HCT116 (cell line): ENCODE measurements at regions of chr7 and their contacts with region 1.

Region 1: DNA sequence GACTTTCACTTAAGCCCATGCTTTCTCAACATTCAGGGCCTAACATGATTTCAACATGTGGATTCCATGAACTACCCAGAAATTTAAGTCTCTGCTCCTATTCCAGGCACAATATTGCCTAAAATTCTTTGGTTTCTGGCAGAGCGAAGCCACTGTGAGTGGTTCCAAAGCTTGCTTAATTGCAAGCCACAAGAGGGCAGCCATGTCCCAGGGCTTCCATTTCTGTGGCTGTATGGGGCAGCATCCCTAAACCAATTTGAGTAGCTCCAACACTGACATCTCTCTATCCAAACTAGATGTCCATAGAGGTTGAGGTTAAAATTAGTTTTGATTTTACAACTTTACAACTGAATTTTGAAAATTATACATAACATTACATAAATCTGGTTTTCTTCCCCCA is 56.3 kb upstream of the MDFIC start:
- DNase-seq: peak; percentile 46
- ATAC-seq: peak; percentile 89
- H3K4me3 ChIP-seq: no peak overlapping the region
- H3K27ac ChIP-seq: no peak overlapping the region
- H3K4me1 ChIP-seq: no peaks in the 10 kb centered on the region
- H3K27me3 ChIP-seq: no peaks in the 10 kb centered on the region
- CTCF ChIP-seq: peak; percentile 71 to 82 (median 75)
- POLR2A ChIP-seq: no peak
- RAD21 ChIP-seq: peak; percentile 92

Region 2: GRCh38 chr7:114432703-114433102 is 432.9 kb before region 1 on chr7:
- CTCF ChIA-PET with region 1: no interaction called
- POLR2A ChIA-PET with region 1: no interaction called
- RAD21 ChIA-PET with region 1: no interaction called
- intact Hi-C with region 1: no loop called
- DNase-seq: no peak
- ATAC-seq: no peak
- H3K4me3 ChIP-seq: no peak overlapping the region
- H3K27ac ChIP-seq: no peak overlapping the region
- H3K4me1 ChIP-seq: no peaks in the 10 kb centered on the region
- H3K27me3 ChIP-seq: no peaks in the 10 kb centered on the region
- CTCF ChIP-seq: no peak
- POLR2A ChIP-seq: no peak
- RAD21 ChIP-seq: no peak

Region 3: GRCh38 chr7:115217373-115217772 is 351.8 kb after region 1 on chr7:
- CTCF ChIA-PET with region 1: interaction called, 20 read pairs
- POLR2A ChIA-PET with region 1: no interaction called
- RAD21 ChIA-PET with region 1: interaction called, 6 to 10 read pairs
- intact Hi-C with region 1: loop called (anchors 5 kb)
- DNase-seq: no peak
- ATAC-seq: no peak
- H3K4me3 ChIP-seq: no peak overlapping the region
- H3K27ac ChIP-seq: no peak overlapping the region
- H3K4me1 ChIP-seq: no peaks in the 10 kb centered on the region
- H3K27me3 ChIP-seq: no peaks in the 10 kb centered on the region
- CTCF ChIP-seq: peak; percentile 4 to 42 (median 28); a peak in 3 of 6 replicates
- POLR2A ChIP-seq: no peak
- RAD21 ChIP-seq: peak; percentile 59

Region 4: GRCh38 chr7:115462301-115463033 is 596.9 kb after region 1 on chr7:
- CTCF ChIA-PET with region 1: no interaction called
- POLR2A ChIA-PET with region 1: no interaction called
- RAD21 ChIA-PET with region 1: no interaction called
- intact Hi-C with region 1: no loop called
- DNase-seq: no peak
- ATAC-seq: no peak
- H3K4me3 ChIP-seq: no peak overlapping the region
- H3K27ac ChIP-seq: no peak overlapping the region
- H3K4me1 ChIP-seq: no peaks in the 10 kb centered on the region
- H3K27me3 ChIP-seq: no peaks in the 10 kb centered on the region
- CTCF ChIP-seq: no peak
- POLR2A ChIP-seq: no peak
- RAD21 ChIP-seq: no peak

Region 5: GRCh38 chr7:115475761-115476385 is 610.3 kb after region 1 on chr7:
- CTCF ChIA-PET with region 1: no interaction called
- POLR2A ChIA-PET with region 1: no interaction called
- RAD21 ChIA-PET with region 1: no interaction called
- intact Hi-C with region 1: loop called (anchors 10 kb)
- DNase-seq: no peak
- ATAC-seq: no peak
- H3K4me3 ChIP-seq: no peak overlapping the region
- H3K27ac ChIP-seq: no peak overlapping the region
- H3K4me1 ChIP-seq: peaks cover 0 to 3% of the 10 kb centered on the region in 2 experiments; a peak in 2 of 4 replicates
- H3K27me3 ChIP-seq: no peaks in the 10 kb centered on the region
- CTCF ChIP-seq: no peak
- POLR2A ChIP-seq: no peak
- RAD21 ChIP-seq: peak; percentile 39

Region 6: GRCh38 chr7:115707258-115708012 is 841.9 kb after region 1 on chr7:
- CTCF ChIA-PET with region 1: interaction called, 17 read pairs
- POLR2A ChIA-PET with region 1: no interaction called
- RAD21 ChIA-PET with region 1: no interaction called
- intact Hi-C with region 1: loop called (anchors 2 kb)
- DNase-seq: peak; percentile 66
- ATAC-seq: peak; percentile 94
- H3K4me3 ChIP-seq: no peak overlapping the region
- H3K27ac ChIP-seq: no peak overlapping the region
- H3K4me1 ChIP-seq: no peaks in the 10 kb centered on the region
- H3K27me3 ChIP-seq: no peaks in the 10 kb centered on the region
- CTCF ChIP-seq: peak; percentile 34 to 68 (median 66); a peak in 4 of 6 replicates
- POLR2A ChIP-seq: no peak
- RAD21 ChIP-seq: peak; percentile 79

Region 7: GRCh38 chr7:115851291-115851690 is 985.7 kb after region 1 on chr7:
- CTCF ChIA-PET with region 1: interaction called, 5 read pairs
- POLR2A ChIA-PET with region 1: no interaction called
- RAD21 ChIA-PET with region 1: no interaction called
- intact Hi-C with region 1: loop called (anchors 1 kb)
- DNase-seq: peak; percentile 54
- ATAC-seq: peak; percentile 65
- H3K4me3 ChIP-seq: no peak overlapping the region
- H3K27ac ChIP-seq: no peak overlapping the region
- H3K4me1 ChIP-seq: no peaks in the 10 kb centered on the region
- H3K27me3 ChIP-seq: no peaks in the 10 kb centered on the region
- CTCF ChIP-seq: peak in 2 of 3 experiments; percentile 58 to 71; a peak in 4 of 6 replicates
- POLR2A ChIP-seq: no peak
- RAD21 ChIP-seq: peak; percentile 86